ENCODE measurements at regions of chr3 and their contacts with region 1.

Region 1: DNA sequence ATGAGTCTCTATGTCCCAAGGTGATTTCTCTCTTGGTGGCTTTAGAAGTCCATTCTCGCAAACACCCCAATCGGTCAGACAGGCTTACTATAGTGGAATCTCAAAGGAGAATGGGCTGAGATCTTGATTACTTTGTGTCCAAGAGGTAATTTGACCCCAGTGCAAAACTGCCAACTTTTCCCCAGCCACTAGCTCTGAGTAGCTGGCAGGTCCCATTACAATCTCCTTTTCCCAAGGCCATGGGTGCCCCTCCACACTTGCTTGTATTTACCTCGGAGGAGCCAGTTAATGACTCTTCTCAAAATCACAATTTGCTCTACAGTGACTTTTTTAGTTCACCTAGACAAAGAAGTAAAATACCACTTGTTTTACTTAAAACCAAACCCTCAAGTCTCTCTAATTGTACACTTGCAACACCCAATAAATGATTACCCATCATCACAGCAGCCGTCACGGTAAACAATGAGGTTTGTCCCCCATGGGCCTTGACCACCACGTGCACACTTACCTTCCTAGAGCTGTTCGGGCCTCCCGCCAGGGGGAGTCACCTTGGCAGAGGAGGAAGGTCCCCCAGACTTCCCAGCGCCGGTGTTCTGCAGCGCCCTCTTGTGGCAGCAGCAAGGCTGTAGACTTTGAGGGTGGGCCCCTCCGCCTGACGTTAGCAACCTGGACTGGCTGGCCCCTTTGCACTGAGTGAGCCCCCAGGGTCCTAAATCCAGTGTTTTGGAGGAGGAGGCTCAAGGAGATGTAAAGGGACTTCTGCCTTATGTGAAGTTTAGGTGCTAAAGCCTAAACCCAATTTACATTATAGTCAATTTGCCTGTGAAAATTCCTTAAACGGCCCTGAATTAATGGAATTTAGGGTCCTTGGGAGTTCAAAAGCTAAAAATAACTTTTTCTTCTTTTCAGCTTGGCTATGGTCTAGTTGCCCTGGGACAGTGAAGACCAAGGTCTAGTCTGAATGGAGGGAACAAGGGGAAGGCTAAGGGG is 18.6 kb upstream of the HDAC11 start:
- DNase-seq: peak in 1 of 2 donors; percentile 50
- ATAC-seq: peak in 1 of 2 donors; percentile 15
- H3K4me3 ChIP-seq: no peak overlapping the region
- H3K27ac ChIP-seq: peak overlapping the region; percentile 70 to 86 (median 82)
- H3K4me1 ChIP-seq: peaks cover 25 to 28% of the 10 kb centered on the region in 2 donors
- H3K27me3 ChIP-seq: no peaks in the 10 kb centered on the region
- CTCF ChIP-seq: peak; percentile 28 to 70 (median 52)
- POLR2A ChIP-seq: no peak

Region 2: GRCh38 chr3:13332158-13332557 is 129.3 kb before region 1 on chr3:
- in situ Hi-C with region 1: no loop called
- intact Hi-C with region 1: loop called (anchors 5 kb)
- DNase-seq: peak; percentile 73 to 78
- ATAC-seq: peak; percentile 97
- H3K4me3 ChIP-seq: no peak overlapping the region
- H3K27ac ChIP-seq: peak overlapping the region; percentile 72 to 88 (median 81)
- H3K4me1 ChIP-seq: peaks cover 9 to 14% of the 10 kb centered on the region in 2 donors
- H3K27me3 ChIP-seq: no peaks in the 10 kb centered on the region
- CTCF ChIP-seq: no peak
- POLR2A ChIP-seq: peak; percentile 13 to 20

Region 3: GRCh38 chr3:13479581-13480339 is 18.3 kb after region 1 on chr3 and contains the start of gene HDAC11:
- in situ Hi-C with region 1: no loop called
- intact Hi-C with region 1: loop called (anchors 2 kb)
- DNase-seq: peak; percentile 99
- ATAC-seq: peak; percentile 80 to 82
- H3K4me3 ChIP-seq: peak within 1 kb of the TSS; percentile 78 to 81 (median 79)
- H3K27ac ChIP-seq: peak within 1 kb of the TSS; percentile 93 to 98 (median 95)
- H3K4me1 ChIP-seq: peaks cover 45 to 49% of the 10 kb centered on the region in 2 donors
- H3K27me3 ChIP-seq: no peaks in the 10 kb centered on the region
- CTCF ChIP-seq: peak in 4 of 5 experiments; percentile 50 to 66 (median 56)
- POLR2A ChIP-seq: peak; percentile 90 to 95
- total RNA-seq, gene HDAC11: 13.0 to 40.4 (median 15.8) TPM

Region 4: DNA sequence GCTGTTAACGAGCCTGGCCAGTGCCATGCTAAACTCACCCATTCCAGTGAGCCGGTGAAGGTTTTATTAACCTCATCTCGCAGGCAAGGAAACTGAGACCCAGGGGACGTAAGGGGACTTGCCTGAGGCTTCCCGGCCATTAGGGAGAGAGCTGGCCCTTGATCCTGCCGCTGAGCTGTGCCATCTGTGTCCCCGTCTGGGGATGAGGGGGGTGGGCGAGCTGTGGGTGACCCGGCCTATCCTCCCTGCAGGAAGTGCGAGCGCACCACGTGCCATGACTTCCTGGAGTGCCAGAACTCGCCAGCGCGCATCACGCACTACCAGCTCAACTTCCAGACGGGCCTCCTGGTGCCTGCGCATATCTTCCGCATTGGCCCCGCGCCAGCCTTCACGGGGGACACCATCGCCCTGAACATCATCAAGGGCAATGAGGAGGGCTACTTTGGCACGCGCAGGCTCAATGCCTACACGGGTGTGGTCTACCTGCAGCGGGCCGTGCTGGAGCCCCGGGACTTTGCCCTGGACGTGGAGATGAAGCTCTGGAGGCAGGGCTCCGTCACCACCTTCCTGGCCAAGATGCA is 175.9 kb after region 1 on chr3:
- in situ Hi-C with region 1: no loop called
- intact Hi-C with region 1: no loop called
- DNase-seq: no peak
- ATAC-seq: no peak
- H3K4me3 ChIP-seq: no peak overlapping the region
- H3K27ac ChIP-seq: no peak overlapping the region
- H3K4me1 ChIP-seq: no peaks in the 10 kb centered on the region
- H3K27me3 ChIP-seq: peaks cover 0 to 11% (median 4%) of the 10 kb centered on the region in 3 donors
- CTCF ChIP-seq: no peak
- POLR2A ChIP-seq: no peak

Measured in gastrocnemius medialis (tissue), 4 donors.